ENCODE measurements at regions of chr11 and their contacts with region 1.

Region 1: GRCh38 chr11:118010738-118011461 is 24.7 kb downstream of the IL10RA start:
- DNase-seq: peak; percentile 86
- ATAC-seq: peak; percentile 85
- H3K4me3 ChIP-seq: no peak overlapping the region
- H3K27ac ChIP-seq: peak overlapping the region; percentile 97
- H3K4me1 ChIP-seq: peaks cover 80% of the 10 kb centered on the region
- H3K27me3 ChIP-seq: no peaks in the 10 kb centered on the region
- CTCF ChIP-seq: no peak
- EP300 ChIP-seq: peak; percentile 100
- POLR2A ChIP-seq: no peak
- RAD21 ChIP-seq: 0 out of 2 replicates have a peak, but pooled peaks have one; percentile 15

Region 2: GRCh38 chr11:117959438-117960149 is 51.3 kb before region 1 on chr11:
- CTCF ChIA-PET with region 1: no interaction called
- POLR2A ChIA-PET with region 1: interaction called, 11 read pairs
- RAD21 ChIA-PET with region 1: no interaction called
- SMC1A ChIA-PET with region 1: interaction called, 3 read pairs
- in situ Hi-C with region 1: no loop called
- intact Hi-C with region 1: no loop called
- DNase-seq: no peak
- ATAC-seq: peak; percentile 65
- H3K4me3 ChIP-seq: no peak overlapping the region
- H3K27ac ChIP-seq: peak overlapping the region; percentile 31
- H3K4me1 ChIP-seq: peaks cover 13% of the 10 kb centered on the region
- H3K27me3 ChIP-seq: no peaks in the 10 kb centered on the region
- CTCF ChIP-seq: no peak
- EP300 ChIP-seq: no peak
- POLR2A ChIP-seq: no peak
- RAD21 ChIP-seq: no peak

Region 3: GRCh38 chr11:117979481-117980211 is 31.3 kb before region 1 on chr11:
- CTCF ChIA-PET with region 1: interaction called, 4 read pairs
- POLR2A ChIA-PET with region 1: interaction called, 8 read pairs
- RAD21 ChIA-PET with region 1: interaction called, 21 read pairs
- SMC1A ChIA-PET with region 1: interaction called, 10 read pairs
- in situ Hi-C with region 1: no loop called
- intact Hi-C with region 1: no loop called
- DNase-seq: peak; percentile 82
- ATAC-seq: peak; percentile 91
- H3K4me3 ChIP-seq: no peak overlapping the region
- H3K27ac ChIP-seq: 0 out of 2 replicates have a peak overlapping the region, but pooled peaks have one; percentile 20
- H3K4me1 ChIP-seq: peaks cover 18% of the 10 kb centered on the region
- H3K27me3 ChIP-seq: no peaks in the 10 kb centered on the region
- CTCF ChIP-seq: no peak
- EP300 ChIP-seq: no peak
- POLR2A ChIP-seq: no peak
- RAD21 ChIP-seq: no peak

Region 4: GRCh38 chr11:118021146-118021545 is 10.2 kb after region 1 on chr11:
- CTCF ChIA-PET with region 1: interaction called, 6 read pairs
- POLR2A ChIA-PET with region 1: interaction called, 7 read pairs
- RAD21 ChIA-PET with region 1: interaction called, 3 read pairs
- SMC1A ChIA-PET with region 1: interaction called, 14 read pairs
- in situ Hi-C with region 1: no loop called
- intact Hi-C with region 1: no loop called
- DNase-seq: no peak
- ATAC-seq: no peak
- H3K4me3 ChIP-seq: no peak overlapping the region
- H3K27ac ChIP-seq: no peak overlapping the region
- H3K4me1 ChIP-seq: peaks cover 4% of the 10 kb centered on the region
- H3K27me3 ChIP-seq: no peaks in the 10 kb centered on the region
- CTCF ChIP-seq: no peak
- EP300 ChIP-seq: no peak
- POLR2A ChIP-seq: no peak
- RAD21 ChIP-seq: no peak

Region 5: DNA sequence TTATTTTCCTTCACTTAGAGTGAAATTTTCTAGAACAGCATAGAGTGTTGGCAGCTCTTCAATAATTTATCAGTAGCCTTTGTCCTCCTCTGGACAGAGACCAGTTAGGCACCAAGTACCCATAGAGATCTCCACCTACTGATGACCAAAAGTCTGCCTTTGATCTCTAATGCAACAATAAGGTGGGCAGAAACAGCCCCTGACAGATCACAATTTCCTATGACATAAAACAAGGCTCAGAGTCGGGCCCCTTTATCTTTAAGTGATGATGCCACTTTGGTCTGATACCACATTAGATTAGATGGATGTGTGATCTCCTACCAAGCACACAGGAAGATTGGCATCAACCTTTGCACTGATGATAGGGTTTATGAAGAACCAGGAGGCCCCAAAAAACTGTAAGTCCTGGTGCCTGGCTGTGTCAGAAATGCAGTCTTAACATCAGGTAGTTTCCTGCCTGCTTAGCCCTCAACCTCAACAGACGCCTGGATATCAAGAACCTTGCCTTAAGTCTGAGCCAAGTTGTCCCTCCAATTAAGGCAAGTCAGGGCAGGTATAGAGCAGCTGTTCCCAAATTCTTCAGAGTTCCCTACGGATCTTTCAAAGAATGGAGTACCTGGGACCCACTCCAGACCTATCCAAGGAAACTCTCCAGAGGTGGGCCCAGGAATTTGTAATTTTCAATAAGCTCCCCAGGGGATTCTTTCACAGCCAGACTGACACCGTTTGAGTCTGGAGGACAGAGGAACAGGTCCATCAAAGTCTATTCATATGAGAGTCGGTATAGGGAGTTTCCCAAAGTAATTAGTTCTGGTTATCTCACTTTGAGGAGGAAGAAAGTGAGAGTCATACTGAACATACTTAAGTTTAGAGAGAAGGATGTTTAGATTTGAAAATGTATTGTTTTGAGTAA is 35.4 kb after region 1 on chr11:
- CTCF ChIA-PET with region 1: interaction called, 4 read pairs
- POLR2A ChIA-PET with region 1: interaction called, 6 read pairs
- RAD21 ChIA-PET with region 1: interaction called, 12 read pairs
- SMC1A ChIA-PET with region 1: interaction called, 20 read pairs
- in situ Hi-C with region 1: no loop called
- intact Hi-C with region 1: loop called (anchors 5 kb)
- DNase-seq: peak; percentile 44
- ATAC-seq: peak; percentile 88
- H3K4me3 ChIP-seq: no peak overlapping the region
- H3K27ac ChIP-seq: no peak overlapping the region
- H3K4me1 ChIP-seq: peaks cover 20% of the 10 kb centered on the region
- H3K27me3 ChIP-seq: no peaks in the 10 kb centered on the region
- CTCF ChIP-seq: no peak
- EP300 ChIP-seq: no peak
- POLR2A ChIP-seq: no peak
- RAD21 ChIP-seq: no peak

Region 6: DNA sequence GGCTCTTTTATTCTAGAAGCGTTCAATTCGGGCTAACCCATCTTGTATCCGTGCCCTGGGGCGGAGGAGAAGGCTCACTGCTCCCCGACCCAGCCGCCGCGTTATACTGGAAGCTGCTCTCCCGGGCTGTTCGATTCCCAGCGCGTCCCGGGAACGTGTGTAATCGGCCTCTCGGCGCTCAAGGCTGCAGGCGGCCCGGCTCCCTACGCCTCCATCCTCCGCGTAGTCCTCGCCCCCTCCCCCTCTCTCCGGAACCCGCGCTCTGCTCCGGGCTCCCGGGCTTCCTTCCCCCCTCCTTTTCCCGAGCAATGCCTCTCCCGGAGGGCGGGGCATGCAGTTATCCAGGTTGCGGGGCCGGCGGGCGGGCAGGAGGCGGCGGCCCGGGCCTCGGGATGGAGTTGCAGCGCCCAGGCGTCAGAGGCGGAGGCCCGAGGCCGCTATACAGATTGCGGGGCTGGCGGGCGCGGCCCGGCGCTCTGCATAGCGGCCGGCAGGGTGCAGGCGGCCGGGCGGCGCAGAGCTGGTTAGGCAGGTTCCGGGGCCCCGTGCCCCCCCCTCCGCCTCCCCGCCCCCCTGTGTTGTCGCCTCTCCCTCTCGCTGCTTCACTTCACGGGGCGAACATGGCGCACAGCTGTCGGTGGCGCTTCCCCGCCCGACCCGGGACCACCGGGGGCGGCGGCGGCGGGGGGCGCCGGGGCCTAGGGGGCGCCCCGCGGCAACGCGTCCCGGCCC is 425.2 kb after region 1 on chr11 and contains the start of gene KMT2A:
- CTCF ChIA-PET with region 1: no interaction called
- POLR2A ChIA-PET with region 1: no interaction called
- RAD21 ChIA-PET with region 1: no interaction called
- SMC1A ChIA-PET with region 1: no interaction called
- in situ Hi-C with region 1: no loop called
- intact Hi-C with region 1: no loop called
- DNase-seq: no peak
- ATAC-seq: peak; percentile 54
- H3K4me3 ChIP-seq: peak within 1 kb of the TSS; percentile 94
- H3K27ac ChIP-seq: peak within 1 kb of the TSS; percentile 94
- H3K4me1 ChIP-seq: peaks cover 5% of the 10 kb centered on the region; the same call in 1 of the 2 replicates
- H3K27me3 ChIP-seq: no peaks in the 10 kb centered on the region
- CTCF ChIP-seq: no peak
- EP300 ChIP-seq: no peak
- POLR2A ChIP-seq: peak; percentile 74
- RAD21 ChIP-seq: no peak
- polyA plus RNA-seq, gene KMT2A: 6.1 to 7.4 TPM

Measured in GM12878 (cell line).